Heart left ventricle (tissue), 16 donors: ENCODE measurements at regions of chr9 and their contacts with region 1.

Region 1: GRCh38 chr9:8234316-8234715 is 434.7 kb upstream of the DMAC1 start:
- DNase-seq: no peak
- ATAC-seq: no peak
- H3K4me3 ChIP-seq: no peak overlapping the region
- H3K27ac ChIP-seq: no peak overlapping the region
- H3K4me1 ChIP-seq: peaks cover 0 to 8% (median 0%) of the 10 kb centered on the region in 12 donors
- H3K27me3 ChIP-seq: no peaks in the 10 kb centered on the region
- CTCF ChIP-seq: no peak
- POLR2A ChIP-seq: no peak

Region 2: DNA sequence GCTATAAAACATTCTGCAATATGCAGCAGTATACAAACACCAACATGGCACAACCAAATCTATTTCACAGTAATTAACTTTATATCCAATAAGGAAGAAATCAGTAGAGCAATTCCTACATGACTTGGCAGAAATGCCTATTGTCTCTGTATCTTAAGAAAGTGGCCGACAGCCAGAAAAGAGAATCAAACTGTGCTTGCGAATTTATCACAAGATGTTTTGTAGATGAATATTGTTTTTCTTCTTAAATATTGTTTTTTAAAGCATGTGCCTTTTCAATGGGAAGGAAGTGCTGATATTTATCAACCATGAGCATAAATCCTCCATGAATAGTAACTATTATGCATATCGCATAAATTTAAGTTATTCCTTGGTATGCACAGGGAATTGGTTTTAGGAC is 67.0 kb after region 1 on chr9:
- intact Hi-C with region 1: no loop called
- DNase-seq: no peak
- ATAC-seq: no peak
- H3K4me3 ChIP-seq: no peak overlapping the region
- H3K27ac ChIP-seq: no peak overlapping the region
- H3K4me1 ChIP-seq: no peaks in the 10 kb centered on the region
- H3K27me3 ChIP-seq: no peaks in the 10 kb centered on the region
- CTCF ChIP-seq: no peak
- POLR2A ChIP-seq: no peak

Region 3: GRCh38 chr9:8391566-8391965 is 157.2 kb after region 1 on chr9:
- intact Hi-C with region 1: loop called in 1 of 10 experiments (anchors 10 kb)
- DNase-seq: no peak
- ATAC-seq: no peak
- H3K4me3 ChIP-seq: no peak overlapping the region
- H3K27ac ChIP-seq: no peak overlapping the region
- H3K4me1 ChIP-seq: no peaks in the 10 kb centered on the region
- H3K27me3 ChIP-seq: no peaks in the 10 kb centered on the region
- CTCF ChIP-seq: no peak
- POLR2A ChIP-seq: no peak